Activated B cell treated with CpG ODN at 0.5 μM for 24 hours (primary cell): ENCODE measurements at regions of chr14 and their contacts with region 1.

Region 1: GRCh38 chr14:50003213-50004031 is 110.5 kb downstream of the ARF6 start:
- DNase-seq: peak; percentile 85
- ATAC-seq: peak; percentile 65
- H3K4me3 Mint-ChIP-seq: peak overlapping the region; percentile 83
- H3K27ac Mint-ChIP-seq: peak overlapping the region; percentile 95
- H3K4me1 Mint-ChIP-seq: peaks cover 79% of the 10 kb centered on the region
- H3K27me3 Mint-ChIP-seq: no peaks in the 10 kb centered on the region
- CTCF ChIP-seq: no peak

Region 2: GRCh38 chr14:49862089-49862673 is 141.2 kb before region 1 on chr14:
- CTCF ChIA-PET with region 1: interaction called, 90 read pairs
- POLR2A ChIA-PET with region 1: interaction called, 190 read pairs
- intact Hi-C with region 1: loop called (anchors 1 kb)
- DNase-seq: peak; percentile 77
- ATAC-seq: peak; percentile 39
- H3K4me3 Mint-ChIP-seq: no peak overlapping the region
- H3K27ac Mint-ChIP-seq: no peak overlapping the region
- H3K4me1 Mint-ChIP-seq: peaks cover 33% of the 10 kb centered on the region
- H3K27me3 Mint-ChIP-seq: peaks cover 2% of the 10 kb centered on the region
- CTCF ChIP-seq: peak; percentile 100

Region 3: DNA sequence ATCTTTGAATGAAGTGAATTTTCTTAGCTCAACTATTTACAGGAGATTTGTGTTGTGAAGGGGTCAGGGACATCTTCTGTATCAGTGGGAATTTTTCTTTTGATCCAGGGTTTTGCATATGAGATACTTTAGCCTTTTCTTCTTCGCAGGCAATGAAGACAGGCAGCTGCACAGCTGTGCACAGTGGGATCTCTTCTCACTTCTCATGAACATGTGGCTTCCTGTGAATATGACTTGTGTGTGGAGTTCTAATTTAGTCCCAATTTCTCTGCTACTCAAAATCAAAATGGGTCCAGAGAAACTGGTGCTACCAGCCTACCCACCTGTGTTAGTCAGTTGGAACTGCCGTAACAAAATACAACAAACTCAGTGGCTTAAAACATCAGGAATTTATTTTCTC is 72.7 kb before region 1 on chr14:
- CTCF ChIA-PET with region 1: no interaction called
- POLR2A ChIA-PET with region 1: interaction called, 7 read pairs
- intact Hi-C with region 1: loop called (anchors 1 kb)
- DNase-seq: no peak
- ATAC-seq: no peak
- H3K4me3 Mint-ChIP-seq: peak overlapping the region; percentile 40
- H3K27ac Mint-ChIP-seq: peak overlapping the region; percentile 88
- H3K4me1 Mint-ChIP-seq: peaks cover 34% of the 10 kb centered on the region
- H3K27me3 Mint-ChIP-seq: no peaks in the 10 kb centered on the region
- CTCF ChIP-seq: no peak

Region 4: DNA sequence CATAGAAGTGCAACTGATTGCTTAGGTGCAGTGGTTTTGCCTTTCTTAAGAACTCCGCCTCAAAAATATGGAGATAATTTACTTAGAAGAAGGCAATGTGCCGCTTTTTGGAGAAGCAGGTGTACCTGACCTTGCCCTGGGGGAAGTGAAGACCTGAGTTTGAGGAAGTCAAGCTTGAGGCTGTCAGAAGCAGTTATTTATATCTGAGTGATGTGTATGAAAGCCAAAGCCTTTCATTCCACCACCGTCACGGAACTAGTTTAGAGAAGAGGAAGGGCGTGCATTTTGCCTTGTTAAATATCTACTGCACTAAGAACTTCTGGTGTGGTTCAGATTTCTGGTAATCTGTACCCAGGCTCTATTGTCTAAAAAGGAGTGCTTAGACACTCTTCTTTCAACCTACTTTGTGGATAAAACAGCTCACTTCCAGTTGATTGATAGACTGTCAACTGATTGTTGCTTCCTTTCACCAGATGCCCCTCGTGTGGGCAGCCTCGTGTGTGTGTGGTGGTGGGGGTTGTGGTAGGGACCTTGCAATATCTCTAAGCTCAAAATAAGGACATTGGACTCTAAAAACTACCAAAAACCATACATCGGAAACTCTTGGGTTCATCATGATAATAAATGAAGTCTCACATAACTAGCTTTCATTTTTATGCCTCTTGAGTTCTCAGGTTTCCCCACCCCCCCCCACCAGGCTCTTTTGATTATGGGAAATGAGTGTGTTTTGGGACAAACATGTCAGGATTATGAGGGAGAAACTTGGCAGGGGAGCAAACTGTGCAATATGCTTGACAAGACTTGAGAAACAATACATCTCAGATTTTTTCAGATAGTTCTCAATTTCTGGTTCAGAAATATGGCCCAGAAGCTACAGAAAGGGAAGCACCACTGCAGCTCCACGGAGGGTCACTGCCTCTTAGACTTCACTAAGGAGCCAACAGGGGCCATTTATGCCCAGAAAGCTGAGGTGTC is 32.0 kb before region 1 on chr14:
- CTCF ChIA-PET with region 1: interaction called, 17 read pairs
- POLR2A ChIA-PET with region 1: interaction called, 301 read pairs
- intact Hi-C with region 1: loop called (anchors 1 kb)
- DNase-seq: no peak
- ATAC-seq: peak; percentile 90
- H3K4me3 Mint-ChIP-seq: peak overlapping the region; percentile 44
- H3K27ac Mint-ChIP-seq: peak overlapping the region; percentile 96
- H3K4me1 Mint-ChIP-seq: peaks cover 70% of the 10 kb centered on the region
- H3K27me3 Mint-ChIP-seq: no peaks in the 10 kb centered on the region
- CTCF ChIP-seq: no peak

Region 5: DNA sequence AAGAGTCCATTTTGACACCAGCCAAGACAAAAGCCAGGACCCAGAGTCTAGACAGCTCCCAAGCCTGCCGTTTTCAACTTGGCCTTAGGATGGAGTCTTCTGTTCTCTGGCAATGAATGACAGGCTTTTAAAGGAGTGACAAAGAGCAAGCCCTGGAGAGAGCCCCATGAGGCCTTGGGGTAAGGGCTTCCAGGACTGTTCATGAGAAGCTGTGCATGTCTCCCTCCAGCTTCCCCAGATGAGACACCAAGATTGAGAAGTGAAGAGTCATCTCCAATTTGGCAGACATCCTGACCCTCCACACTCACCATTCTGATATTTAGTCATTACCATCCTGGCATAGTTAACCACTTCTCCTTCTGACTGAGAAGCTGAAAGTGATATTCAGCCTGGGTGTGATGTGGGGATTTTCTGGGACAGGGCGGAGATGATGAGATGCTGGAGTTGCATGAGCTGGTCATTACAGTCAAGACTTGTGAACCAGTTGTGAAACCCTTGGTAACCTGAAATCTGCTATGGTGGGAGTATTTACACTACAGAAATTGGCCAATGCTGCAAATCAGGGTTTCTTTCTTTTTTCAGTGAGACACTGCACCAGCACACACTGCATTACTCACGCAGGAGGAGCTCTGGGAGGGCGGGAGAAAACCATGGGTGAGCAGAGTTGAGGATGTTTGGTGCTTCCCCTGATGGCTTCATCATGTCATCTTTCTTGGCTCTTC is 35.1 kb after region 1 on chr14:
- CTCF ChIA-PET with region 1: interaction called, 9 read pairs
- POLR2A ChIA-PET with region 1: interaction called, 81 read pairs
- intact Hi-C with region 1: loop called (anchors 1 kb)
- DNase-seq: no peak
- ATAC-seq: peak; percentile 78
- H3K4me3 Mint-ChIP-seq: peak overlapping the region; percentile 52
- H3K27ac Mint-ChIP-seq: peak overlapping the region; percentile 93
- H3K4me1 Mint-ChIP-seq: peaks cover 45% of the 10 kb centered on the region
- H3K27me3 Mint-ChIP-seq: no peaks in the 10 kb centered on the region
- CTCF ChIP-seq: no peak

Region 6: DNA sequence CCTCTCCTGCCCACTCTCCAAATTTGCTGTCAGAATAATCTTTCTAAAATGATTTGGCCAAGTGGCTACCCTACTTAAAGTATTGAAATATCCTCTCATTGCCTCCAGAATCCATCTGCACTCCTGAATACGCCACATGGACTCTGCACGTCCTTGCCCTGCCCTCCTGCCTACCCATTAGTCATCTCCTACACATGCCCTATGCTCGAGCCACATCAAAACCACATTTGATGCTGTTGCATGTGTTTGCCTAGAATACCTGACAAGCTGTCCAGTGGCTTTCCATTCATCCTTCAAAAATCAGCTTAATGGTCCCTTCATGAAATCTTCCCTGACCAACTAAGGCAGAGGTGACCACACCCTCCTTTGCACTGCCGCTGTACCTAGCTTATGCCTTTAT is 95.9 kb after region 1 on chr14:
- CTCF ChIA-PET with region 1: interaction called, 15 read pairs
- POLR2A ChIA-PET with region 1: interaction called, 18 read pairs
- intact Hi-C with region 1: no loop called
- DNase-seq: no peak
- ATAC-seq: no peak
- H3K4me3 Mint-ChIP-seq: no peak overlapping the region
- H3K27ac Mint-ChIP-seq: peak overlapping the region; percentile 62
- H3K4me1 Mint-ChIP-seq: peaks cover 74% of the 10 kb centered on the region
- H3K27me3 Mint-ChIP-seq: no peaks in the 10 kb centered on the region
- CTCF ChIP-seq: no peak

Region 7: GRCh38 chr14:50249136-50249800 is 245.8 kb after region 1 on chr14:
- CTCF ChIA-PET with region 1: no interaction called
- POLR2A ChIA-PET with region 1: no interaction called
- intact Hi-C with region 1: no loop called
- DNase-seq: no peak
- ATAC-seq: no peak
- H3K4me3 Mint-ChIP-seq: no peak overlapping the region
- H3K27ac Mint-ChIP-seq: no peak overlapping the region
- H3K4me1 Mint-ChIP-seq: no peaks in the 10 kb centered on the region
- H3K27me3 Mint-ChIP-seq: no peaks in the 10 kb centered on the region
- CTCF ChIP-seq: no peak